ENCODE measurements at regions of chr7 and their contacts with region 1.

Region 1: GRCh38 chr7:103972779-103973434 is 16.6 kb downstream of the RELN start:
- DNase-seq: no peak
- ATAC-seq: no peak
- H3K4me3 ChIP-seq: no peak overlapping the region
- H3K27ac ChIP-seq: no peak overlapping the region
- H3K4me1 ChIP-seq: no peaks in the 10 kb centered on the region
- H3K27me3 ChIP-seq: no peaks in the 10 kb centered on the region

Region 2: DNA sequence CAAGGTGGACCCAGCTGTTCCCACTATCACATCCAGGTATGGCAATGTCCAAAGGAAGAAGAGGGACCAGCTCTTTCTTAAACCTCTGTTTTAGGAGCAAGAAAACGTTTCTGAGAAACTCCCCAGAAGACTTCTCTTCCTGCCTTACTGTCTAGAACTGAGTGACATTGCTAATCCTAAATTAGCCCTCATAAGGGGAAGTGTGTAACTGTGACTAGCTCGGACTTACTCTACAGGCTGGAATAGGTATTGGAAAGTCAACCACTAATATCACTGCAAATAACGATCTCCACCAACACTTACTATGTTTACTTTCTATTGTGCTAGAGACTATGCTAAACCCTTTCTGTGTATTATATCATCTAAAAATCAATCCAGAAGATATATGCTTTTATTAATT is 66.5 kb after region 1 on chr7:
- intact Hi-C with region 1: loop called in 1 of 4 experiments (anchors 10 kb)
- DNase-seq: no peak
- ATAC-seq: no peak
- H3K4me3 ChIP-seq: no peak overlapping the region
- H3K27ac ChIP-seq: no peak overlapping the region
- H3K4me1 ChIP-seq: no peaks in the 10 kb centered on the region
- H3K27me3 ChIP-seq: no peaks in the 10 kb centered on the region

Region 3: DNA sequence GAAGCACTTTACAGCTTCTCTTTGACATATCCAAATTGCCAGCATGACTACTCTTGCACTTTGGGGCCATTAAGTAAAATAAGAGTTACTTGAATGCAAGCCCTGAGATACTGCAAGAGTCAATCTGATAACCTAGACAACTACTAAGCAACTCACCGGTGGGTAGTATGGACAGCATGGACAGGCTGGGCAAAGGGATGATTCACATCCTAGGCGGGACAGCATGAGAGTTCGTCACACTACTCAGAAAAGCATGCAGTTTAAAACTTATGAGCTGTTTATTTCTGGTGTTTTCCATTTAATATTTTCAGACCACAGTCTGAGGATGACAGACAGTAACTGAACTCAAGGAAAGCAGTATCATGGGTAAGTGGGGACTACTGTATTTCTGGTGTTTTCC is 150.9 kb after region 1 on chr7:
- intact Hi-C with region 1: no loop called
- DNase-seq: no peak
- ATAC-seq: no peak
- H3K4me3 ChIP-seq: no peak overlapping the region
- H3K27ac ChIP-seq: no peak overlapping the region
- H3K4me1 ChIP-seq: no peaks in the 10 kb centered on the region
- H3K27me3 ChIP-seq: no peaks in the 10 kb centered on the region